Gastrocnemius medialis (tissue), 4 donors: ENCODE measurements at regions of chr1 and their contacts with region 1.

Region 1: DNA sequence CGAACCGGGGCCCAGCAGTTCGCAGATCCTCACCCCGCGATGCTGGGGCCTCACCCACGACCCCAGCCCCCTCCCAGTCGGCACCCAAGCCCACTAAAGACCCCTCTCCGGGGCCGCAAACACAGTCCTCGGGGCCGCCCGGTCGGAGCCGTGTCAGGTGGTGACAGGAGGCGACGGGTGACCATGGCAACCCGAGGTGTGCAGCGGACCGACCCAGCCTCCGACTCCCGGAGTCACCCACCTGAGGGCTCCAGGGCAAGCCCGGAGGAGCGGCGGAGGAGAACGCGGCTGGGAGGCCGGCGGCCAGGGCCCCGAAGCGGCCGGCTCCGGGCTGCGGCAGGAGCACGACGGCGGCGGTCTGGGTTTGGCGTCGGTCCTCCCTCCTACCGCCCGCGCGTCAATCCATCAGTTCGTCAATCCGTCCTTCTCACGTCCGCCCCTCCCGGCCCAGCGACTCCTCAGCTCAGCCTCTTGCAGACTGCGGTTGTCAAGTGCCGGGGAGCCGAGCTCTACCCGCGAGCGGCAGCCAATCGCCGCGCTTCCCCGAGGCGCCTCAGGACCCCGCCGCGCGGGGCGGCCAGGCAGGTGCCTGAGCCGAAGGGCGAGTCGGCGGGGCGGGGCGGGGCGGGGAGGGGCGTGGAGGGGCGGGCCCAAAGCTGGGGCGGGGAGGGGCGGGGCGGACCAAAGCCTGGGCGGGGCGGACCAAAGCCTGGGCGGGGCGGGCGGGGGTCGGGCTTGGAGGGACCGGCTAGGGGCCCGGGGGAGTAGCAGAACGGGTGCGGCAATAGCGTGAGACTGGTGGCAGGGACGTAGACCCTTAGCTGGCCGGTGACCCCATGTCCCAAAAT is at the start of gene WDR47:
- DNase-seq: peak; percentile 93 to 95
- ATAC-seq: peak; percentile 98
- H3K4me3 ChIP-seq: peak within 1 kb of the TSS; percentile 83 to 99 (median 90)
- H3K27ac ChIP-seq: peak within 1 kb of the TSS; percentile 83 to 93 (median 90)
- H3K4me1 ChIP-seq: peaks cover 9 to 11% of the 10 kb centered on the region in 2 donors
- H3K27me3 ChIP-seq: no peaks in the 10 kb centered on the region
- CTCF ChIP-seq: peak in 1 of 5 experiments; percentile 12
- POLR2A ChIP-seq: peak; percentile 89 to 95
- total RNA-seq, gene WDR47: 13.9 to 18.8 (median 17.5) TPM

Region 2: GRCh38 chr1:108925920-108926319 is 115.9 kb before region 1 on chr1:
- in situ Hi-C with region 1: no loop called
- intact Hi-C with region 1: no loop called
- DNase-seq: no peak
- ATAC-seq: no peak
- H3K4me3 ChIP-seq: no peak overlapping the region
- H3K27ac ChIP-seq: no peak overlapping the region
- H3K4me1 ChIP-seq: no peaks in the 10 kb centered on the region
- H3K27me3 ChIP-seq: no peaks in the 10 kb centered on the region
- CTCF ChIP-seq: no peak
- POLR2A ChIP-seq: no peak

Region 3: GRCh38 chr1:108963052-108963686 is 78.7 kb before region 1 on chr1 and contains the start of gene CLCC1:
- in situ Hi-C with region 1: no loop called
- intact Hi-C with region 1: loop called (anchors 5 kb)
- DNase-seq: peak; percentile 92
- ATAC-seq: peak; percentile 98
- H3K4me3 ChIP-seq: peak within 1 kb of the TSS; percentile 65 to 85 (median 69)
- H3K27ac ChIP-seq: peak within 1 kb of the TSS; percentile 88 to 96 (median 91)
- H3K4me1 ChIP-seq: peaks cover 10 to 13% of the 10 kb centered on the region in 2 donors
- H3K27me3 ChIP-seq: no peaks in the 10 kb centered on the region
- CTCF ChIP-seq: no peak
- POLR2A ChIP-seq: peak; percentile 86 to 92
- total RNA-seq, gene CLCC1: 24.1 to 32.4 (median 28.5) TPM

Region 4: DNA sequence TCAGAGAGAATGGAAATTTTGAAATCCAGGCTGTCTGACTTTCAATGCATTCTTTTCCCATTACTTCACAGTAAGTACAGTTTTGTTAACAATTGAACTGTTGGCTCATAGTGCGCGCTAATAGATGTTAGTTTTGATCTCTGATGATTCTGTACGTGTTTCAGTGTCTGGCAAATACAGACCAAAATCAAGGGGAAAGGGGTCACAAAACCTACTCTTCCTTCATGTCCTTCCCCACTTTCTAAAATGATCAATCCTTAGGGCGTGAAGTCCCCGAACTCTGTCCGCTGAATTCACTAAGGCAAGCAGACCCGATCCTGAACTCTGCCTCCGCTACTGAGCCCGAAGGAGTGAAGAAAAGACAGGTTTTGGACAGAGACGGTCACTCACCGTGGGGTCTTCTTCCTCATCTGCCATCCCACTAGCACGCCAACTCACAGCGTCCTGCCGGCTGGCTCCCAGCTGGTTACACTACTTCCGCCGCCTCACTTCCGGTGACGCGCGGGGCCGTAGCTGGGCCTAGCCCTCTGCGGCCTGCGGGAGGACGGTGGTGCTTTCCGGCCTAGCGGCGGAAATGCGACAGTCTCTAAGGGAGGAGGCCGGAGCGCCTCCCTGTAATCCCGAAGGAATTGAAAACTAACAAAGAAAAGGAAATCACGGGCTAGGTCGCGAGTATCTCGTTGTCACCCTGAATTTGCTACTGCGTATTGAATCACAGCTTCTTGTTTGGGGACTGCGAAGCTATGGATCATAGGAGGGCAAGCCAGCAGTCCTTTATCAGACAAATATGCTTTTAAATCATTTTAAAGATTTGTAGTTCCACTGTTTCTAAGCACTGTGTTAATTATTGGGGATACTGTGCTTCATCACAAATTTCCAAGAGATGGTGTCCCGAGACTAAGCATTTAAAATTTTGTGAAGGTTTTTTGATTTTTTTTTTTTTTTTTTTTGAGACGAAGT is 34.0 kb after region 1 on chr1 and contains the start of gene TAF13:
- in situ Hi-C with region 1: no loop called
- intact Hi-C with region 1: loop called (anchors 1 kb)
- DNase-seq: peak; percentile 85 to 92
- ATAC-seq: peak; percentile 98
- H3K4me3 ChIP-seq: peak within 1 kb of the TSS; percentile 77 to 79 (median 78)
- H3K27ac ChIP-seq: peak within 1 kb of the TSS; percentile 87 to 97 (median 96)
- H3K4me1 ChIP-seq: peaks cover 10 to 14% of the 10 kb centered on the region in 2 donors
- H3K27me3 ChIP-seq: no peaks in the 10 kb centered on the region
- CTCF ChIP-seq: peak; percentile 40 to 65 (median 56)
- POLR2A ChIP-seq: peak; percentile 88 to 89
- total RNA-seq, gene TAF13: 28.8 to 83.3 (median 65.5) TPM

Region 5: GRCh38 chr1:109090196-109091077 is 48.6 kb after region 1 on chr1 and contains the start of gene TMEM167B:
- in situ Hi-C with region 1: no loop called
- intact Hi-C with region 1: loop called (anchors 2 kb)
- DNase-seq: peak; percentile 92 to 94
- ATAC-seq: peak; percentile 94 to 98
- H3K4me3 ChIP-seq: peak within 1 kb of the TSS; percentile 75 to 89 (median 80)
- H3K27ac ChIP-seq: peak within 1 kb of the TSS; percentile 93 to 98 (median 94)
- H3K4me1 ChIP-seq: peaks cover 30 to 41% of the 10 kb centered on the region in 2 donors
- H3K27me3 ChIP-seq: no peaks in the 10 kb centered on the region
- CTCF ChIP-seq: peak in 3 of 5 experiments; percentile 5 to 11 (median 11)
- POLR2A ChIP-seq: peak; percentile 75 to 87
- total RNA-seq, gene TMEM167B: 17.5 to 26.3 (median 21.8) TPM

Region 6: GRCh38 chr1:109112652-109113285 is 70.9 kb after region 1 on chr1:
- in situ Hi-C with region 1: no loop called
- intact Hi-C with region 1: loop called (anchors 5 kb)
- DNase-seq: peak; percentile 72 to 85
- ATAC-seq: peak; percentile 90 to 95
- H3K4me3 ChIP-seq: peak overlapping the region; percentile 36 to 53 (median 42)
- H3K27ac ChIP-seq: no peak overlapping the region
- H3K4me1 ChIP-seq: peaks cover 12 to 20% of the 10 kb centered on the region in 2 donors
- H3K27me3 ChIP-seq: peaks cover 22 to 35% (median 34%) of the 10 kb centered on the region in 3 donors
- CTCF ChIP-seq: peak; percentile 80 to 97 (median 94)
- POLR2A ChIP-seq: no peak

Region 7: DNA sequence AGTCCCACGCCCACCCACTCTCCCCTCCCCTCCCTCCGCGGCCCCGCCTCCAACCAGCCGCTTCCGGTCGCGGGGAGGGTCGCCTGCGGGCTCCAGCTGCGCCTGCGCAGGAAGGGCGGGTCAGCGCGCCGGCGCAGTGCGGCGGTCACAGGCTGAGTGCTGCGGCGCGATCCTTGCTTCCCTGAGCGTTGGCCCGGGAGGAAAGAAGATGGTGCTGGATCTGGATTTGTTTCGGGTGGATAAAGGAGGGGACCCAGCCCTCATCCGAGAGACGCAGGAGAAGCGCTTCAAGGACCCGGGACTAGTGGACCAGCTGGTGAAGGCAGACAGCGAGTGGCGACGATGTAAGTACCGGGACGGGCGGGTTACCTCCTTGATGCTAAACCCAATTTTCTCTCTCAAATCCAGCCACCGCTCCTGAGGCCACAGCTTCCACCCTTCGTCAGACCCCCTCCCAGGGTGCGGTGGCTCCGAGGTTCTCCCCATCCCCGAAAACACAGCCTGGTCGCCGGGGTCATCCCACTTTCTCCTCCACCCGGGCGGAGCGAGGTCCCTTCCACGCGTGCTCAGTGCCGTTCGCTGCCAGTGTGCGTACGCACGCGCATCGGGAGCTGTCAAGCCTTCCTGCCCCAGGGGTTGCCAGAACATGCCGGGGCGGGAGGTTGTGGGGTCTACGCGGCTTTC is 172.1 kb after region 1 on chr1 and contains the start of gene SARS1:
- in situ Hi-C with region 1: no loop called
- intact Hi-C with region 1: loop called (anchors 2 kb)
- DNase-seq: peak; percentile 79 to 83
- ATAC-seq: peak; percentile 91 to 92
- H3K4me3 ChIP-seq: peak within 1 kb of the TSS; percentile 80 to 98 (median 87)
- H3K27ac ChIP-seq: peak within 1 kb of the TSS; percentile 89 to 97 (median 94)
- H3K4me1 ChIP-seq: peaks cover 18 to 25% of the 10 kb centered on the region in 2 donors
- H3K27me3 ChIP-seq: no peaks in the 10 kb centered on the region
- CTCF ChIP-seq: no peak
- POLR2A ChIP-seq: peak; percentile 85 to 94
- total RNA-seq, gene SARS1: 97.6 to 116 (median 98.7) TPM